ENCODE measurements at regions of chr16 and their contacts with region 1.

Region 1: GRCh38 chr16:75029557-75030253 is 30.9 kb downstream of the ZNRF1 start:
- DNase-seq: peak; percentile 16
- H3K4me3 Mint-ChIP-seq: no peak overlapping the region
- H3K27ac Mint-ChIP-seq: no peak overlapping the region
- H3K4me1 Mint-ChIP-seq: no peaks in the 10 kb centered on the region
- H3K27me3 Mint-ChIP-seq: no peaks in the 10 kb centered on the region
- CTCF ChIP-seq: no peak

Region 2: GRCh38 chr16:75074304-75074793 is 44.6 kb after region 1 on chr16:
- CTCF ChIA-PET with region 1: interaction called, 10 read pairs
- intact Hi-C with region 1: no loop called
- DNase-seq: no peak
- H3K4me3 Mint-ChIP-seq: no peak overlapping the region
- H3K27ac Mint-ChIP-seq: no peak overlapping the region
- H3K4me1 Mint-ChIP-seq: peaks cover 11% of the 10 kb centered on the region
- H3K27me3 Mint-ChIP-seq: no peaks in the 10 kb centered on the region
- CTCF ChIP-seq: no peak

Region 3: DNA sequence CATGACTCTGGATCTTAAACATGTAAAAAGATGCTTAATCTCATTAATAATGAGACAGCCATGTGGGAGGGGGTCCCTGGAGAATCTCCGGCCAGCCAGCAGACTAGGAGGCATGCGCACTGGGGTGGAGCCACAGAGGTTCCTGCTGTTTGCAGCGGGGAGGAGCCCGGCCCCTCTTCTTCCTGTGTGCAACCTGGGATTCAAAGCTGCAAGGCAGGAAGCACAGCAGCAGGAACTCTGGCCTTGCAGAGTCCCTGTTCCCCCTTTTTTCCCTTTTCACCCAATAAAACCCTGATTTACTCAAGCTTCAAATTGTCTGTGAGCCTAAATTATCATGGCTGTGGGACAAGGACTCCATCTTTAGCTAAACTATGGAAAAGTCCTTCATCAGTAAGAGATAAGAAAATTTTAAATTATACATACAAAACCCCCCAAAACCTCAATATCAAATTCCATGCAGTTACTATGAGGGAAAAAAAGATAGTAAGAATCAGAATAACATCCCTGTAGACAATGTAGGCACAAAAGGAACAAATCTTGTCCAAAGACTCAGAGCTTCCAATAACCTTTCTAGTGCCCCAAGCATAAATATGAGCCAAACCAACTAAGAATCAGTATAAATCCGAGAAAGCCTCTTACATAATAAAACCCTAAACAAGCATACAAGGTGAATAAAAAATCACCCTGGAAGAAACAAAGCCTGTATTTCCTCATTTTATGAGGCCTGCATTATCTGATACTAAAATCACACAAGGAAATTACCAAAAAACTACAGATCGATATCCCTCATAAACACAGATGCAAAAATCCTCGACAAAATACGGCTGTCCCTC is 391.5 kb after region 1 on chr16:
- CTCF ChIA-PET with region 1: no interaction called
- intact Hi-C with region 1: no loop called
- DNase-seq: peak; percentile 62
- H3K4me3 Mint-ChIP-seq: no peak overlapping the region
- H3K27ac Mint-ChIP-seq: peak overlapping the region; percentile 29
- H3K4me1 Mint-ChIP-seq: peaks cover 22% of the 10 kb centered on the region
- H3K27me3 Mint-ChIP-seq: no peaks in the 10 kb centered on the region
- CTCF ChIP-seq: no peak

Measured in Calu3 (cell line).